CD8-positive, alpha-beta memory T cell (primary cell): ENCODE measurements at regions of chr3 and their contacts with region 1.

Region 1: DNA sequence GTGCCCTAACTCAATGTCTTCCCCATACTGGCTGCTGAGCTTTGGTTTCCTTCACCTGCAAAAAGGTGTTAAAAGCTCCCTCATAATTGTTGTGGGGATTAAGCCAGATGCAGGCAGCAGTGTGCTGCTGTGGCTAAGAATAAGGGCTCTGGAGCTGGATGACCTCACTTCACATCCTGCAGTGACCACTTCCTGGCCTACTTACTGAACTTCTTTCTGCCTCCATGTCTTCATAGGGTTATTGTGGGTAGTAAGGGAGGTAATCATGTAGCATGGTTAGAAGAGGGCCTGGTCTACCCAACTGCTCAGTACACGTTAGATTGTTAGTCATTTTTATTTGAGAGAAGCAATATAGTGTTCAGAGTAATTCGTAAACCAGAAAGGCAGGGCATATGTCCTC is 18.4 kb downstream of the GYG1 start:
- DNase-seq: peak in 4 of 5 donors; percentile 27 to 83 (median 70)
- H3K4me3 ChIP-seq: no peak overlapping the region
- H3K4me3 Mint-ChIP-seq: peak overlapping the region; percentile 4 to 75 (median 64)
- H3K27ac ChIP-seq: no peak overlapping the region
- H3K27ac Mint-ChIP-seq: peak overlapping the region; percentile 72 to 96 (median 95)
- H3K4me1 ChIP-seq: peaks cover 35% of the 10 kb centered on the region
- H3K4me1 Mint-ChIP-seq: peaks cover 57 to 69% (median 66%) of the 10 kb centered on the region in 3 donors
- H3K27me3 ChIP-seq: no peaks in the 10 kb centered on the region
- H3K27me3 Mint-ChIP-seq: no peaks in the 10 kb centered on the region

Region 2: GRCh38 chr3:148991194-148992026 is 18.3 kb before region 1 on chr3 and contains the start of gene GYG1:
- CTCF ChIA-PET with region 1: interaction called, 8 read pairs
- POLR2A ChIA-PET with region 1: interaction called, 17 read pairs
- DNase-seq: peak; percentile 73 to 88 (median 78)
- H3K4me3 ChIP-seq: peak within 1 kb of the TSS; percentile 53
- H3K4me3 Mint-ChIP-seq: peak within 1 kb of the TSS; percentile 82 to 90 (median 86)
- H3K27ac ChIP-seq: peak within 1 kb of the TSS; percentile 68
- H3K27ac Mint-ChIP-seq: peak within 1 kb of the TSS; percentile 87 to 97 (median 93)
- H3K4me1 ChIP-seq: peaks cover 26% of the 10 kb centered on the region
- H3K4me1 Mint-ChIP-seq: peaks cover 43 to 52% (median 48%) of the 10 kb centered on the region in 3 donors
- H3K27me3 ChIP-seq: no peaks in the 10 kb centered on the region
- H3K27me3 Mint-ChIP-seq: no peaks in the 10 kb centered on the region
- total RNA-seq, gene GYG1: 31.9 to 35.0 TPM

Region 3: GRCh38 chr3:149023951-149024350 is 14.2 kb after region 1 on chr3:
- CTCF ChIA-PET with region 1: interaction called, 10 read pairs
- POLR2A ChIA-PET with region 1: no interaction called
- DNase-seq: no peak
- H3K4me3 ChIP-seq: no peak overlapping the region
- H3K4me3 Mint-ChIP-seq: no peak overlapping the region
- H3K27ac ChIP-seq: no peak overlapping the region
- H3K27ac Mint-ChIP-seq: peak overlapping the region in 5 of 8 donors; percentile 26 to 68 (median 50)
- H3K4me1 ChIP-seq: no peaks in the 10 kb centered on the region
- H3K4me1 Mint-ChIP-seq: peaks cover 29 to 35% (median 29%) of the 10 kb centered on the region in 3 donors
- H3K27me3 ChIP-seq: no peaks in the 10 kb centered on the region
- H3K27me3 Mint-ChIP-seq: peaks cover 0 to 1% of the 10 kb centered on the region in 2 donors